CD4-positive, alpha-beta T cell (primary cell): ENCODE measurements at regions of chr11 and their contacts with region 1.

Region 1: GRCh38 chr11:19561011-19561410 is 151.6 kb upstream of the NAV2 start:
- DNase-seq: no peak
- ATAC-seq: no peak
- H3K4me3 ChIP-seq: no peak overlapping the region
- H3K4me3 Mint-ChIP-seq: no peak overlapping the region
- H3K27ac ChIP-seq: no peak overlapping the region
- H3K27ac Mint-ChIP-seq: no peak overlapping the region
- H3K4me1 ChIP-seq: peaks cover 7% of the 10 kb centered on the region
- H3K4me1 Mint-ChIP-seq: no peaks in the 10 kb centered on the region
- H3K27me3 ChIP-seq: peaks cover 4 to 8% of the 10 kb centered on the region in 2 experiments
- H3K27me3 Mint-ChIP-seq: peaks cover 46% of the 10 kb centered on the region
- CTCF ChIP-seq: no peak

Region 2: GRCh38 chr11:19808076-19808911 is 247.3 kb after region 1 on chr11:
- CTCF ChIA-PET with region 1: no interaction called
- POLR2A ChIA-PET with region 1: no interaction called
- intact Hi-C with region 1: loop called in 1 of 2 experiments (anchors 2 kb)
- DNase-seq: no peak
- ATAC-seq: no peak
- H3K4me3 ChIP-seq: no peak overlapping the region
- H3K4me3 Mint-ChIP-seq: no peak overlapping the region
- H3K27ac ChIP-seq: no peak overlapping the region
- H3K27ac Mint-ChIP-seq: no peak overlapping the region
- H3K4me1 ChIP-seq: no peaks in the 10 kb centered on the region
- H3K4me1 Mint-ChIP-seq: no peaks in the 10 kb centered on the region
- H3K27me3 ChIP-seq: no peaks in the 10 kb centered on the region
- H3K27me3 Mint-ChIP-seq: peaks cover 14% of the 10 kb centered on the region
- CTCF ChIP-seq: no peak

Region 3: GRCh38 chr11:19903620-19904069 is 342.6 kb after region 1 on chr11:
- CTCF ChIA-PET with region 1: no interaction called
- POLR2A ChIA-PET with region 1: no interaction called
- intact Hi-C with region 1: loop called in 1 of 2 experiments (anchors 2 kb)
- DNase-seq: peak in 11 of 14 experiments; percentile 3 to 54 (median 19)
- ATAC-seq: no peak
- H3K4me3 ChIP-seq: no peak overlapping the region
- H3K4me3 Mint-ChIP-seq: no peak overlapping the region
- H3K27ac ChIP-seq: no peak overlapping the region
- H3K27ac Mint-ChIP-seq: no peak overlapping the region
- H3K4me1 ChIP-seq: no peaks in the 10 kb centered on the region
- H3K4me1 Mint-ChIP-seq: no peaks in the 10 kb centered on the region
- H3K27me3 ChIP-seq: no peaks in the 10 kb centered on the region
- H3K27me3 Mint-ChIP-seq: no peaks in the 10 kb centered on the region
- CTCF ChIP-seq: peak; percentile 40